A673 (cell line): ENCODE measurements at regions of chr19 and their contacts with region 1.

Region 1: DNA sequence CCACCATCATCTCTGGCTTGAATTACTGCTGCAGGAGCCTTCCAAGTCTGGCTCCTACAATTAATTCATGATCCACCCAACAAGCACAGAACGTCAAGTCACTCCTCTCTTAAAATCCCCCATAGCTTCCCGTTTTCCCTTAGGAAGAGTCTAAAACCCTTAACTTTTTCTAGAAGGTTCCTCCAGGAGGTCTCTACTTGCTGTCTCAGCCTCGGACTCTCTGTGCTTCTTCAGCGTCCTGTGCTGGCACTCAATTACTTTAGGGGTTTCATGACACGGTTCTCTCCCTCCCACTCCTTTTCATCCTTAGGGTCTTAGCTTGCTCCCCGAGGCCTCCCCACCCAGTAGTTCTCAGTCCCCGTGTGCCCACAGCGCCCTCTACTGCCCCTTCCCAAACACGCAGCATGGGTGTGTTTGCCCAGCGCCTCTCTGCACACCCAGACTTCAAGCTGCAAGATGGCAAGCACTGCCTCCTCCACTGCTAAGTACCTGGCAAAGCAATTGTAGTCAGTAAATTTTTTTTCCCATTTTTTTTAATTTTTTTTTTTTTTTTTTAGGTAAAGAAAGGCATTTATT is 25.8 kb upstream of the MAP3K10 start:
- DNase-seq: peak; percentile 89
- H3K4me3 ChIP-seq: peak overlapping the region; percentile 20
- H3K27ac ChIP-seq: no peak overlapping the region
- H3K4me1 ChIP-seq: peaks cover 4% of the 10 kb centered on the region
- H3K27me3 ChIP-seq: no peaks in the 10 kb centered on the region
- CTCF ChIP-seq: peak; percentile 96

Region 2: DNA sequence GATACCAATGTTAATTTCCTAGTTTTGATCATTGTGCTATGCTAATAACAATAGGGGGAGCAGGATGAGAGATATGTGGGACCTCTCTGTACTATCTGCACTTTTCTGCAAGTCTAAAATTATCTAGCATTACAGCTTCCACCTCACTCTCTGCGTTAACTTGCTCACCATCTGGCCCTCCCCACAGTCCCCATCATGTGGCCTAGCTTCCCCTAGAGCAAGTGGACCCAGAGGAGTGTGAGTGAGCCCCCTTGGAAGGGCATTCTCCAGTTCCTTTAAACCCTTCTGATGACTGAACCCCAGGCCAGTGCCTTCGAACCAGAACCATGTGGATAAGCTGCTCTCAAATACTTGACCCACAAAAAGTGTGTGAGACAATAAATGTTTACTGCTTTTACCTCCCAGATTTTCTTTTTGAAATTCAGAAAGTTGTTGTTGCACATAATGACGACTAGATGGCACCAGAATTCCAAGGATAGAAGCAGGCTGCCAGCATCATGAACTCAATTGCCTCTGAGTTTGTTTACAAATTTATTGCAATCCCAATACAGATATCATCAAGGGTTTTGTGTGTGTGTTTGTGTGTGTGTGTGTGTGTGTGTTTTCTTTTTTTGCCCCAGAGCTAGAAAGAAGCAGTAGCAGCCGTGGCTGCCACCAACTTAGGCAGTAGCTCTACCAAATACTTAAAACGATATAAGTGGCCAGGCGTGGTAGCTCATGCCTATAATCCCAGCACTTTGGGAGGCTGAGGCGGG is 25.7 kb before region 1 on chr19:
- CTCF ChIA-PET with region 1: interaction called, 21 read pairs
- POLR2A ChIA-PET with region 1: no interaction called
- intact Hi-C with region 1: loop called (anchors 1 kb)
- DNase-seq: peak; percentile 73
- H3K4me3 ChIP-seq: no peak overlapping the region
- H3K27ac ChIP-seq: no peak overlapping the region
- H3K4me1 ChIP-seq: peaks cover 24% of the 10 kb centered on the region
- H3K27me3 ChIP-seq: no peaks in the 10 kb centered on the region
- CTCF ChIP-seq: peak; percentile 80

Region 3: GRCh38 chr19:40190891-40191835 is 25.7 kb after region 1 on chr19 and contains the start of gene MAP3K10:
- CTCF ChIA-PET with region 1: no interaction called
- POLR2A ChIA-PET with region 1: no interaction called
- intact Hi-C with region 1: loop called (anchors 2 kb)
- DNase-seq: peak; percentile 75
- H3K4me3 ChIP-seq: peak within 1 kb of the TSS; percentile 100
- H3K27ac ChIP-seq: peak within 1 kb of the TSS; percentile 97
- H3K4me1 ChIP-seq: no peaks in the 10 kb centered on the region
- H3K27me3 ChIP-seq: no peaks in the 10 kb centered on the region
- CTCF ChIP-seq: no peak
- total RNA-seq, gene MAP3K10: 17.8 and 21.7 TPM in 2 replicates

Region 4: GRCh38 chr19:40217027-40217810 is 51.8 kb after region 1 on chr19:
- CTCF ChIA-PET with region 1: no interaction called
- POLR2A ChIA-PET with region 1: interaction called, 12 read pairs
- intact Hi-C with region 1: no loop called
- DNase-seq: peak; percentile 41
- H3K4me3 ChIP-seq: no peak overlapping the region
- H3K27ac ChIP-seq: no peak overlapping the region
- H3K4me1 ChIP-seq: no peaks in the 10 kb centered on the region
- H3K27me3 ChIP-seq: peaks cover 31% of the 10 kb centered on the region
- CTCF ChIP-seq: peak; percentile 81

Region 5: DNA sequence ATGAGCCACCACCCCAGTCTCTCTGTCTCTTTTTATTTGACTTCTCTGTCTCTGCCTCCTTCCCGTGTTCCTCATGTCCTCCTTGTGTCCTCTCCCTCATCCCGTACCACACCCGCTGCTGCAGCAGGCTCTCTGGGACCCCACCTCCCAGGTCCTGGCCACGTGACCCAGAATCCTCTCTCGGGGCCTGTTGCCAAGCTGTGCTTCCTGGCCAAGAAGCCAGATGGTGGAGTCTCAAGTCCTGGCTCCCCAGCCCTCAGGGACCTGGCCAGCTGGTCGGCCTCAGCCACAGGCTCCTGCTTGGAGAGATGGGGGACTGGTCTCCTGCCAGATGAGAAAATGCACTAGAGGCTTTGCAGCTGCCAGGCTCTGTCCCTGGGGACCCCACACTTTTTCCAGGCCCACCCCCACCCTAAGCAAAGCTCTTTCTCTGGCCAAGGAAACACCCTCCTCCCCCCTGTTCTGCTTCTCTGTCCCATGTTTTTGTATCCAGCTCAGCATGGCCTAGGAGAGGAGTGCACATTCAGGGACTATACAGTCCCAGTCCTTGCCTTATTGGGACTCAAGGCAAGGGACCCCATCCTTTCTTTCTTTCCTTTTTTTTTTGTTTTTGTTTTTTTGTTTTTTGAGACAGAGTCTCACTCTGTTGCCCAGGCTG is 376.9 kb after region 1 on chr19:
- CTCF ChIA-PET with region 1: interaction called, 11 read pairs
- POLR2A ChIA-PET with region 1: no interaction called
- intact Hi-C with region 1: no loop called
- DNase-seq: peak; percentile 40
- H3K4me3 ChIP-seq: no peak overlapping the region
- H3K27ac ChIP-seq: no peak overlapping the region
- H3K4me1 ChIP-seq: peaks cover 8% of the 10 kb centered on the region
- H3K27me3 ChIP-seq: no peaks in the 10 kb centered on the region
- CTCF ChIP-seq: no peak